Right ventricle myocardium inferior (tissue), 1 donor: ENCODE measurements at regions of chrX and their contacts with region 1.

Region 1: DNA sequence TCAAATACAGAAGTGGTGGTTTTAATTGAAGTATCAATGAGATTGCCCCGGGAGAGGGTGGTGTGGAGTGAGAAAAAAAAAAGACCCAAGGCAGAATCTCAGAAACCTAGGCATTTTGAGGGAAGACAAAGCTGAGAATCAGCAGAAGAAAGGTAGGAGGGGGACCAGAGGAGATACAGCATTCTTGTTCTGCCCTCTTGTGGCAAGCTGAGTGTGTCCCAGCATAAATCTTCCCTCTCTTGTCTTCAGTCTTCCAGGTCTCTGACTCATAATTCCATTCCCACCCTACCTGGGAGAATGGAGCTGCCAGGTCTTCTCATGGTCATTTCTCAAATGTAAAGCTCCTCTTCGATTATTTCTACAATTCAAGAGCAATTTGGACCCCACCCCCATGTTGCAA is 32.7 kb upstream of the MAGED1 start:
- DNase-seq: no peak
- ATAC-seq: no peak

Region 2: GRCh38 chrX:51641421-51642021 is 219.2 kb before region 1 on chrX:
- intact Hi-C with region 1: loop called (anchors 5 kb)
- DNase-seq: no peak
- ATAC-seq: no peak